MCF 10A (cell line): ENCODE measurements at regions of chr9 and their contacts with region 1.

Region 1: GRCh38 chr9:4792572-4793458 is at the start of gene RCL1:
- DNase-seq: peak; percentile 95
- H3K4me3 Mint-ChIP-seq: peak within 1 kb of the TSS; percentile 100
- H3K27ac Mint-ChIP-seq: peak within 1 kb of the TSS; percentile 85
- H3K4me1 Mint-ChIP-seq: peaks cover 20% of the 10 kb centered on the region
- H3K27me3 Mint-ChIP-seq: no peaks in the 10 kb centered on the region
- CTCF ChIP-seq: no peak
- total RNA-seq, gene RCL1: 20.2 and 27.8 TPM in 2 replicates

Region 2: DNA sequence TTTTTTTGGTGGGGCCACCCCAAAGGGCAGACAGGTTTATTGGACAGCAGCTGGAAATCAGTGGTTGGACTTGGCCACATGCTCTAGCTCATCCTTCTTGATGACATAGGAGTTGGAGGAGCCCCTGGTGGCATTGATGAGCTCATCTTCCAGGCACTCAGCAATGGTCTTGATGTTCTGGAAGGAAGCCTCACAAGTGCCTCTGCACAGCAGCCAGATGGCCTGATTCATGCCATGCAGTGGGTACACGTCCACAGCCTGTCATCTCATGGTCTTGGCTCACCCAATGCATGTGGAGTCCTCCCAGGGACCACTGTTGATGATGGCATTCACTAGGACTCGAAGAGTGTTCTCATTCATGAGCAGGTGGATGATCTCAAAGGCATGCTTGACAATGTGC is 11.4 kb before region 1 on chr9:
- CTCF ChIA-PET with region 1: interaction called, 3 read pairs
- POLR2A ChIA-PET with region 1: interaction called, 15 read pairs
- intact Hi-C with region 1: no loop called
- DNase-seq: no peak
- H3K4me3 Mint-ChIP-seq: no peak overlapping the region
- H3K27ac Mint-ChIP-seq: no peak overlapping the region
- H3K4me1 Mint-ChIP-seq: peaks cover 7% of the 10 kb centered on the region
- H3K27me3 Mint-ChIP-seq: no peaks in the 10 kb centered on the region
- CTCF ChIP-seq: no peak

Region 3: DNA sequence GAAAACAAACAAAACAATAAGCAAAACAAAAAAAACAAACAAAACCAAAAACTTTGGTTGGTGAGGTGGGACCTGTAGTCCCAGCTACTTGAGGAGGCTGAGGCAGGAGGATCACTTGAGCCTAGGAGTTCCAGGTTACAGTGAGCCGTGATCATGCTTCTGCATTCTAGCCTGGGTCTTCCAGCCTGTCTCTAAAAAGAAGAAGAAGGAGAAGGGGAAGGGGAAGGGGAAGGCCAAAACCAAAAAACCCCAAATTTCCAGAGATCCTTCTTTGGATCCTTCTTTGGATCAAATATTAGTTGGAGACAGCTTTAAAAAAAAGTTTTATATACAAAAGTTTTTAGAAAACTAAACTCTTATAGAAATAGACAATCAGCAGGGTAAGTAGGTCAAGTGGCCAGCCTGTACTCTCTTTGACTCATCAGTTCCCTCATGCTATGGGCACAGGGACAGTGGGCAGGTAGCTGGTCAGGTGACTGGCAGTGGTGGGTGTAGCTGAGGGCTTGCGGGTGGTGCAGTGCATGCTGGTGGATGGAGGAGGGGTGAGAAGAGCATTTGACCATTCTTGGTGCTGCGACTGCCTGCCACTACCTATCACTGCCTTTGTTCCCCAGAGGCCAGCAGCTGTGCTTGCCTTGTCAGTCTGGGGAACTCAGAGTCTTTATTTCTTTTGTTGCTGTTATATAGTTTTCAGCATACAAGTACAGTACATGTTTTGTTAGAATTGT is 12.5 kb after region 1 on chr9:
- CTCF ChIA-PET with region 1: interaction called, 10 read pairs
- POLR2A ChIA-PET with region 1: interaction called, 5 read pairs
- intact Hi-C with region 1: no loop called
- DNase-seq: no peak
- H3K4me3 Mint-ChIP-seq: no peak overlapping the region
- H3K27ac Mint-ChIP-seq: no peak overlapping the region
- H3K4me1 Mint-ChIP-seq: peaks cover 11% of the 10 kb centered on the region
- H3K27me3 Mint-ChIP-seq: no peaks in the 10 kb centered on the region
- CTCF ChIP-seq: no peak

Region 4: GRCh38 chr9:4814913-4815312 is 22.1 kb after region 1 on chr9:
- CTCF ChIA-PET with region 1: interaction called, 15 read pairs
- POLR2A ChIA-PET with region 1: interaction called, 5 read pairs
- intact Hi-C with region 1: no loop called
- DNase-seq: no peak
- H3K4me3 Mint-ChIP-seq: no peak overlapping the region
- H3K27ac Mint-ChIP-seq: no peak overlapping the region
- H3K4me1 Mint-ChIP-seq: peaks cover 17% of the 10 kb centered on the region
- H3K27me3 Mint-ChIP-seq: no peaks in the 10 kb centered on the region
- CTCF ChIP-seq: no peak

Region 5: GRCh38 chr9:4832786-4833579 is 40.2 kb after region 1 on chr9:
- CTCF ChIA-PET with region 1: interaction called, 9 read pairs
- POLR2A ChIA-PET with region 1: interaction called, 15 read pairs
- intact Hi-C with region 1: loop called (anchors 5 kb)
- DNase-seq: peak; percentile 91
- H3K4me3 Mint-ChIP-seq: peak overlapping the region; percentile 47
- H3K27ac Mint-ChIP-seq: peak overlapping the region; percentile 93
- H3K4me1 Mint-ChIP-seq: peaks cover 39% of the 10 kb centered on the region
- H3K27me3 Mint-ChIP-seq: no peaks in the 10 kb centered on the region
- CTCF ChIP-seq: no peak